Dendritic cell treated with granulocyte-macrophage colony-stimulating factor and Interleukin-4, amounts not matched to agents 40 ng/mL and 50 ng/mL, for 4 days (primary cell): ENCODE measurements at regions of chr20 and their contacts with region 1.

Region 1: GRCh38 chr20:45322952-45323383 is 14.9 kb upstream of the MATN4 start:
- H3K4me3 Mint-ChIP-seq: no peak overlapping the region
- H3K27ac Mint-ChIP-seq: peak overlapping the region; percentile 41
- H3K4me1 Mint-ChIP-seq: peaks cover 13% of the 10 kb centered on the region
- H3K27me3 Mint-ChIP-seq: peaks cover 7% of the 10 kb centered on the region

Region 2: DNA sequence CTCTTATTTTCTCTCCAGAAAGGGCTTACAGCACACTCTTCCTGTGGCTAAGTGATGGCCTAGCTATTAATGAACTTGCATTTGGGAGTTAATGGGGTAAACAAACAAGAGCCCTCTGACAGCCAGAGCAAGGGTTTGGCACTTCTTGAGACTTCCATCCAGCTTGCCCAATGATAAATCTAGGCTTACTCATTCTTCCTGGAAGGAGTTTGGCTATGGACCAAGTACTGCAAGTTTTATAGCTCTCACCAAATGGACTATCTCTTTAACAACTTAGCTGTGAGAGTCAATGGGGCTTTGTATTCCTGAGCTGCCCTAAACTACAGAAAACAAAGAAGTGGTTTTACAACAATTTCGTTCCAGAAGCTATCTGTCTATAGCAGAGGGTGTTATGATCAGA is 165.0 kb before region 1 on chr20:
- intact Hi-C with region 1: no loop called
- H3K4me3 Mint-ChIP-seq: no peak overlapping the region
- H3K27ac Mint-ChIP-seq: no peak overlapping the region
- H3K4me1 Mint-ChIP-seq: peaks cover 24% of the 10 kb centered on the region
- H3K27me3 Mint-ChIP-seq: peaks cover 17% of the 10 kb centered on the region

Region 3: GRCh38 chr20:45362804-45363610 is 40.0 kb after region 1 on chr20 and contains the start of gene SYS1:
- intact Hi-C with region 1: loop called (anchors 5 kb)
- H3K4me3 Mint-ChIP-seq: peak within 1 kb of the TSS; percentile 97
- H3K27ac Mint-ChIP-seq: peak within 1 kb of the TSS; percentile 97
- H3K4me1 Mint-ChIP-seq: peaks cover 85% of the 10 kb centered on the region
- H3K27me3 Mint-ChIP-seq: no peaks in the 10 kb centered on the region

Region 4: GRCh38 chr20:45373353-45374100 is 50.6 kb after region 1 on chr20:
- intact Hi-C with region 1: no loop called
- H3K4me3 Mint-ChIP-seq: peak overlapping the region; percentile 68
- H3K27ac Mint-ChIP-seq: peak overlapping the region; percentile 70
- H3K4me1 Mint-ChIP-seq: peaks cover 31% of the 10 kb centered on the region
- H3K27me3 Mint-ChIP-seq: peaks cover 8% of the 10 kb centered on the region

Region 5: GRCh38 chr20:45436732-45437391 is 113.9 kb after region 1 on chr20:
- intact Hi-C with region 1: loop called (anchors 1 kb)
- H3K4me3 Mint-ChIP-seq: peak overlapping the region; percentile 85
- H3K27ac Mint-ChIP-seq: peak overlapping the region; percentile 85
- H3K4me1 Mint-ChIP-seq: peaks cover 19% of the 10 kb centered on the region
- H3K27me3 Mint-ChIP-seq: peaks cover 5% of the 10 kb centered on the region

Region 6: DNA sequence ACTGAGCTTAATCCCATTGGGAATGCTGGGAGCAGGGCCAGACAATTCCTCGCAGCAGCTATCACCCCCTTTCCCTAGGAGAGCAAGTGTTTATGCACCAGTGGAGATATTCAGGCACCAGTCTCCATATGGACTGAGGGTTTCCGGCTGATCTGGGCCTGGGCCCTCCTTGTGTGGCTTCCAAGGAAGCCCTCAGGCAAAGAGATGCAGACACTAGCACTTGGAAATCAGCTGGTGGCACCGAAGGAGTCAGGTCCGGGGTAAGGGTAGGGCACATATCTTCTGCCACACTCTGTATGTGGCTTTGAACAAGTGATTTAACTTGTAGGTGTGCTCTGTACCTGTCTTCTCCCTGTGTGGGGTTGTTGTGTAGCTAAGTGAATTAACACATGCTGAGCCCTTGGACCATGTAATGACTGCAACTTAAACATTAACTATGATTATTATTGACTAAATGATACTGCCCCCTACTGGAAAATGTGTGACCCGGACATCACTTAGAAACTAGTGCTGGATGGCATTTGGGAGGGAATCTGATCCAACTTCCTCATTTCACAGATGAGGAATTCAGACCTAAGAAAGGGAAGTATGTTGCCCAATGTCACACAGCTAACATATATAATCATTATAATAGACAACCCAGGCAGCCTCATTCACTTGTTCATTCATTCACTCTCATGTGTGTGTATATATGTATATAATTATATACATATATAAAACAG is 127.3 kb after region 1 on chr20:
- intact Hi-C with region 1: loop called (anchors 5 kb)
- H3K4me3 Mint-ChIP-seq: no peak overlapping the region
- H3K27ac Mint-ChIP-seq: no peak overlapping the region
- H3K4me1 Mint-ChIP-seq: peaks cover 27% of the 10 kb centered on the region
- H3K27me3 Mint-ChIP-seq: no peaks in the 10 kb centered on the region

Region 7: DNA sequence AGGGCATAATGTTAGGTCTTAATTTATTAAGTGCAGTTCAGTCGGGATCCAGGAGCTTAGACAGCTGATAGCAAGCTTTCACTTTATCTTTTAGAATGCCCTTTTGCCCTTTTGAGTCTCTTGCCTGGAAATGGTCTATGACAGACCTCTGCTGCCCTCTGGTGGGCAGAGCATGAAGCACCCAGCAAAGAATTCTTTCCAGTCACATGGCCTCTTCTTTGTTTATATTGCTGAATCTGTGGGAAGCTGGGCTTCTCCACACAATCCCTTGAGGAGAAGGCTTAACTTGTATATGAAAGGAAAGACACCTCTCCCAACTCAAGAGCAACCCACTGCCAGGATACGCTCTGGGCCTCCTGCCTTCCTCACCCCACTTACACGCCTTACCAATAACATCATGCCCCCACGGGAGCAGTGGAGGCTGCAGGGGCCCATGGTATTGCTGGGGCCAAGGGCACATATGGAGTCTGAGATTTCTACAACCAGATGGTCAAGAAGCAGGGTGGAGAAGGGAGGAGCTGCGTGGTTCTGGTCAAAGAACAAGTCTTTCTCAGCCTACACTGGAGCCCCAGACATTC is 448.3 kb after region 1 on chr20:
- intact Hi-C with region 1: loop called (anchors 1 kb)
- H3K4me3 Mint-ChIP-seq: no peak overlapping the region
- H3K27ac Mint-ChIP-seq: no peak overlapping the region
- H3K4me1 Mint-ChIP-seq: peaks cover 5% of the 10 kb centered on the region
- H3K27me3 Mint-ChIP-seq: peaks cover 12% of the 10 kb centered on the region